Aorta (tissue), 5 donors: ENCODE measurements at regions of chr5 and their contacts with region 1.

Region 1: GRCh38 chr5:74919487-74919886 is 53.3 kb upstream of the FAM169A start:
- DNase-seq: no peak
- ATAC-seq: no peak
- H3K4me3 ChIP-seq: no peak overlapping the region
- H3K27ac ChIP-seq: no peak overlapping the region
- H3K4me1 ChIP-seq: no peaks in the 10 kb centered on the region
- H3K27me3 ChIP-seq: no peaks in the 10 kb centered on the region

Region 2: DNA sequence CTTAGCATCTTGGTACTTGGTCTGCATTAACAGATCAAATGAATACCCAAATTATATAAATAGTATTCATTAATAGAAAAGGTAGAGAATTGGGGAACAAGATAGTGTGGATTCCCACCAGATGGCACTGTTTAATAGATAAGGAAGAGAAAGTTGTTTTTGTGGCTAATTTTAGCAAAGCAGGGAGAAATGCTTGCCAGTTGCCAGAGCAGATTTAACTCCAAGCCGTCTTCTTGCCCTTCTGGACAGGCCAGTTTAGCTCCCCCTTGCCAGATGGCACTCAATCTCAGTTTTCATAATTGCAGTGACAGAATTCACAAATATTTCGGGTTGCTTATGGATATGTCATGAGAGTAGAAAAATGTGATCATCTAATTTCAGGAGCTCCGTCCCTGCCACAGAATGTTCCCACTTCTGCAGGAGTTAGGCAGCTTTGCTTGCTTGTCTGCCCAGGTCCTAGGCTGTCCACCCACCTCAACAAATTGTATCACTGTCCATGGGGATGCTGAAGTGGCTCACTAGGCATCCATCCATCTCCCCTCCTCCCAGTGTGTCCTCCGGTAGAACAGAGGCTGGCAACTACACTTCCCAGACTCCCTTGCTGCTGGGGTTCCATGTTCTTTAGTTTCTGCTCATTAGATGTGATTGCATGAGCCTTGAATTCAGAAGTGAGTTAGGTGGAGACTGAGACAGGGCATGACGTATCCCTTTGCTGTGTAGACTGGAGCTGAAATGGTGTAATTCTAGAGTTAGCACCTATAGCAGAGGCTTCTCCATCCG is 246.3 kb before region 1 on chr5:
- intact Hi-C with region 1: loop called (anchors 2 to 5 kb)
- DNase-seq: no peak
- ATAC-seq: peak; percentile 74
- H3K4me3 ChIP-seq: peak overlapping the region in 1 of 2 donors; percentile 21
- H3K27ac ChIP-seq: peak overlapping the region; percentile 21 to 48
- H3K4me1 ChIP-seq: peaks cover 0 to 5% of the 10 kb centered on the region in 2 donors
- H3K27me3 ChIP-seq: no peaks in the 10 kb centered on the region

Region 3: DNA sequence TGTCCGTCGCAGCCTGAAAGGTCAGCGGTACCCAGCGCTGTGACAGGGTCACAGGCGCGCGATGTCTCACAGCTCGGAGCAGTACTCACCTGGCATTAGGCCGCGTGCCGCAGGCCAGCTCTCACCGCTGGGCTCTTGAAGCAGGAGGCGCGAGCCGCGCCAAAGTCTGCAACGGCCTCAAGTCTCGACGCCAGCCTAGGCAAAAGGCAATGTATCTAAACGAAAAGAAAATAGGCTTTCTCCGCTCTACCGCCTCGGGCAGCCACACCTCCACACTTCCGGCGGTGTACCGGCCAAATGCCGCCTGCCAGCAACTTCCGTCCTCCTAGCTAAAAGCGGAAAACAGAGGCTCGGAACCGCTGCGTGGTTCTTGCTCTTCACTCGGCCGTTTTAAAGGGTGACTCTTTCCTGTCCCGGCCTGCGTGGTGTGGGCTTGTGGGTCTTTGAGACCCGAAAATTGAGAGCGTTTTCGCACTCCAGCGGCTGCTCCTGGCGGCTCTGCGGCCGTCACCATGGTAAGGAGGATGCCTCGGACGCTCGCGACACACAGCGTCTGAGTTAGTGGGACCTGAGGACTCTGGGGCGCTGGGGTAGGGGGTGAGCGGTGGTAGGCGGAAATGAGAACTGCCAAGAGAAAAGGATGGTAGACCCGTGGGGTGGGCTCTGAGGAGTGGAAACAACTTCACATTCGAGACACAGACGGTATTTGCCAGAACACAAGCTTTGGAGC is 152.5 kb before region 1 on chr5 and contains the starts of genes GFM2 and NSA2:
- intact Hi-C with region 1: loop called (anchors 2 to 5 kb)
- DNase-seq: peak; percentile 94 to 96
- ATAC-seq: peak; percentile 99
- H3K4me3 ChIP-seq: peak within 1 kb of the TSS; percentile 73 to 99
- H3K27ac ChIP-seq: peak within 1 kb of the TSS in 1 of 2 donors; percentile 43
- H3K4me1 ChIP-seq: no peaks in the 10 kb centered on the region
- H3K27me3 ChIP-seq: no peaks in the 10 kb centered on the region
- total RNA-seq, gene GFM2: 18.2 to 18.6 TPM
- total RNA-seq, gene NSA2: 50.9 to 57.9 TPM

Region 4: DNA sequence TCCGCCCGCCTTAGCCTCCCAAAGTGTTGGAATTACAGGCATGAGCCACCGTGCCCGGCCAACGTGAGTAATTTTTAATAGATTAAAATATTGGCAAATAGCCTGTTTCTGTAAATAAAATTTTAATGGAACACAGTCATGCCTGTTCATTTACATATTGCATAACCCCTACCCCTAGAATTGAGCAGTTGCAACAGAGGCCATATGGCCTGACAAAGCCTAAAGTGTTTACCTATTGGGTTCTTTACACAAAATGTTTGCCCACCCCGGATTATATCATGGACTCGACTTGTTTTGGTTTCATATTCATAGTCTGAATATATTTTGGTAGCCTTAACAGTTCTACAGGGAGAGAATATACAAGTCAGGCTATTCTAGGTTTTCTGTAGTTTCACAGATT is 147.1 kb before region 1 on chr5:
- intact Hi-C with region 1: loop called (anchors 2 to 5 kb)
- DNase-seq: no peak
- ATAC-seq: no peak
- H3K4me3 ChIP-seq: no peak overlapping the region
- H3K27ac ChIP-seq: no peak overlapping the region
- H3K4me1 ChIP-seq: no peaks in the 10 kb centered on the region
- H3K27me3 ChIP-seq: no peaks in the 10 kb centered on the region